ENCODE measurements at regions of chr1 and their contacts with region 1.

Region 1: GRCh38 chr1:6365047-6365446 is 28.5 kb downstream of the ACOT7 start:
- DNase-seq: no peak
- H3K4me3 ChIP-seq: no peak overlapping the region
- H3K27ac ChIP-seq: no peak overlapping the region
- H3K27me3 ChIP-seq: no peaks in the 10 kb centered on the region
- CTCF ChIP-seq: no peak

Region 2: GRCh38 chr1:6317098-6317760 is 47.8 kb before region 1 on chr1:
- CTCF ChIA-PET with region 1: interaction called, 11 read pairs
- POLR2A ChIA-PET with region 1: no interaction called
- DNase-seq: no peak
- H3K4me3 ChIP-seq: no peak overlapping the region
- H3K27ac ChIP-seq: peak overlapping the region; percentile 31
- H3K27me3 ChIP-seq: no peaks in the 10 kb centered on the region
- CTCF ChIP-seq: no peak

Measured in AG04450 (cell line).